ENCODE measurements at regions of chr6 and their contacts with region 1.

Region 1: DNA sequence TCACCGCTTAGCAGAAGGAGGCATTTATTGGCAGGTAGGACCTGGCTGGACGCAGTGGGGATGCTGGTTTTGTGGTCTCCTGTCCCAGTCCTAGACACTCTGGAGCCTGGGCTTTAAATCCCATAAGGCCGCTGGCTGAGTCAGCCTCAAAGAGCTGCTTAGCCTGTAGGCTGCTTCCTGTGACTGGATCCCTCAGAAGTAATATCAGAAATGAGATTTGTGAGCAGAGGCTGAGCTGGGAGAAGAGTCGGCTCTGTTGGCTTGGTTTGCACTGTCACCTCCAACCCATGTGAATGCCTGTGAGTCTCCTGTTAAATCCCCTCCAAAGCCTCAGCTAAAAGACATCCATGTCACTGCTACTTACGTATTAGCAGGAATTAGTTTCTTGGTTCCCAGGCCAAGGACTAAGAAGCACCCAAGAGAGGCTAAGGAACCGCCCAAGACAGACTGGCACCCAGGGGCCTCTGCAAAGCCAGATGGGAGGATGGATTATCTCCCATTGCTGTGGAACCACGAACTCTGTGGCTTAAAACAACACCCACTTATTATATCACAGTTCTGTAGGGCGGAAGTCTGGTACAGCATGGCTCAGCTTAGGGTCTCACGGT is 289.4 kb downstream of the CDC5L start:
- DNase-seq: no peak
- H3K4me3 ChIP-seq: no peak overlapping the region
- H3K27ac ChIP-seq: no peak overlapping the region
- H3K4me1 ChIP-seq: no peaks in the 10 kb centered on the region
- H3K27me3 ChIP-seq: no peaks in the 10 kb centered on the region
- CTCF ChIP-seq: no peak

Region 2: GRCh38 chr6:44925100-44925739 is 248.3 kb after region 1 on chr6:
- CTCF ChIA-PET with region 1: no interaction called
- POLR2A ChIA-PET with region 1: interaction called, 11 read pairs
- intact Hi-C with region 1: no loop called
- DNase-seq: peak; percentile 28
- H3K4me3 ChIP-seq: no peak overlapping the region
- H3K27ac ChIP-seq: no peak overlapping the region
- H3K4me1 ChIP-seq: no peaks in the 10 kb centered on the region
- H3K27me3 ChIP-seq: no peaks in the 10 kb centered on the region
- CTCF ChIP-seq: no peak